ENCODE measurements at regions of chr19 and their contacts with region 1.

Region 1: GRCh38 chr19:21482863-21483276 is 22.5 kb upstream of the ZNF429 start:
- DNase-seq: peak; percentile 48
- H3K4me3 ChIP-seq: no peak overlapping the region
- H3K27ac ChIP-seq: peak overlapping the region in 2 of 4 donors; percentile 24 to 30
- H3K4me1 ChIP-seq: no peaks in the 10 kb centered on the region
- H3K27me3 ChIP-seq: no peaks in the 10 kb centered on the region
- CTCF ChIP-seq: peak; percentile 20 to 78 (median 71)
- EP300 ChIP-seq: no peak
- POLR2A ChIP-seq: no peak

Region 2: GRCh38 chr19:21698215-21698614 is 215.3 kb after region 1 on chr19:
- in situ Hi-C with region 1: loop called in 1 of 4 experiments (anchors 25 kb)
- intact Hi-C with region 1: loop called (anchors 2 kb)
- DNase-seq: no peak
- H3K4me3 ChIP-seq: no peak overlapping the region
- H3K27ac ChIP-seq: no peak overlapping the region
- H3K4me1 ChIP-seq: no peaks in the 10 kb centered on the region
- H3K27me3 ChIP-seq: no peaks in the 10 kb centered on the region
- CTCF ChIP-seq: peak; percentile 36 to 59 (median 57)
- EP300 ChIP-seq: no peak
- POLR2A ChIP-seq: no peak

Region 3: DNA sequence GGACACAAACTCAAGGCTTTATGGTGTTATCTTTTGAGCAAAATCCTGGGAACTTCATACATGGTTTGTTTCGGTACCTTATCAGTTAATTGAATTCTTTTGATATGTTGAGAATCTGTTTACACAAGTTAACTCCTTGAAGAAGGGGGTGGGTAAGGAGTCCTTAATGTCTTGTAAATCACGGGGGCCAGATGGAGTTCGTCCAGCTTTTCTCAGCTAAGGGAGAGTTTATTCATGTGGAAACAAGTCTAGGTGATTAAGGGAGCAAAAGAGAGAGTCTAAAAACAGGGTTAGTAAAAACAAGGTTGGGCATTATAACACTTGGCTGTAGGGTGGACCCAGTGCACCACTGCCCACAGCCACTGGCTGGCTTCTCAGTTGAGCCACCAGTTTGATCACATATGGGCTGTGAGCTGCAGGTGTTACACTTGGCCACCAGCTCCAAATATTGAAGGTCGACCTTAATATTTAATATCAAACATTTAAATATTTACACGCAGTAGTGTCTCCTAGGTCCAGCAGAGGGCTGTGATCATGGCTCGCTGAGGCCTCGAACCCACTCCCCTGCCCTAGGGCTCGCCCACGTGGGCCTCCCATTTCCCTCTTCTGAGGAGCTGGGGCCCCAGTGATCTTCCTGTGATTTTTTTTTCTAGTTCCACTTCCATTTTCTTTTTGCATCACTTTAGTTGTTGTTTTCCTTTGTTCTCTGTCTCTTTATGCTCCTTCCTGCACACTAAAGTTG is 374.1 kb after region 1 on chr19:
- in situ Hi-C with region 1: no loop called
- intact Hi-C with region 1: no loop called
- DNase-seq: no peak
- H3K4me3 ChIP-seq: no peak overlapping the region
- H3K27ac ChIP-seq: no peak overlapping the region
- H3K4me1 ChIP-seq: peaks cover 0 to 4% (median 1%) of the 10 kb centered on the region in 4 donors
- H3K27me3 ChIP-seq: no peaks in the 10 kb centered on the region
- CTCF ChIP-seq: no peak
- EP300 ChIP-seq: no peak
- POLR2A ChIP-seq: no peak